Activated T-helper 1 cell treated with anti-CD3 and anti-CD28 coated beads, Interleukin-12 subunit alpha, Interleukin-12 subunit beta, Interleukin-2, Interleukin-4 antibody, amounts not matched to agents 30 ng/mL and 10 ng/mL and 1 ng/mL, durations not matched to agents 14 hours and 24 hours and 36 hours (primary cell): ENCODE measurements at regions of chr17 and their contacts with region 1.

Region 1: GRCh38 chr17:1516388-1517161 is at the start of gene INPP5K:
- DNase-seq: peak; percentile 99
- H3K4me3 Mint-ChIP-seq: peak within 1 kb of the TSS; percentile 93
- H3K27ac Mint-ChIP-seq: peak within 1 kb of the TSS; percentile 76
- H3K4me1 Mint-ChIP-seq: peaks cover 13% of the 10 kb centered on the region
- H3K27me3 Mint-ChIP-seq: no peaks in the 10 kb centered on the region
- total RNA-seq, gene INPP5K: 23.9 and 24.7 TPM in 2 replicates

Region 2: GRCh38 chr17:1260086-1260769 is 256.3 kb before region 1 on chr17:
- intact Hi-C with region 1: loop called (anchors 1 kb)
- DNase-seq: no peak
- H3K4me3 Mint-ChIP-seq: peak overlapping the region; percentile 10
- H3K27ac Mint-ChIP-seq: no peak overlapping the region
- H3K4me1 Mint-ChIP-seq: peaks cover 19% of the 10 kb centered on the region
- H3K27me3 Mint-ChIP-seq: peaks cover 50% of the 10 kb centered on the region

Region 3: GRCh38 chr17:1365445-1366039 is 151.0 kb before region 1 on chr17:
- intact Hi-C with region 1: loop called (anchors 1 kb)
- DNase-seq: peak; percentile 48
- H3K4me3 Mint-ChIP-seq: no peak overlapping the region
- H3K27ac Mint-ChIP-seq: no peak overlapping the region
- H3K4me1 Mint-ChIP-seq: peaks cover 47% of the 10 kb centered on the region
- H3K27me3 Mint-ChIP-seq: no peaks in the 10 kb centered on the region

Region 4: GRCh38 chr17:1455797-1456599 is 60.6 kb before region 1 on chr17 and contains the start of gene CRK:
- intact Hi-C with region 1: loop called (anchors 1 kb)
- DNase-seq: peak; percentile 99
- H3K4me3 Mint-ChIP-seq: peak within 1 kb of the TSS; percentile 92
- H3K27ac Mint-ChIP-seq: peak within 1 kb of the TSS; percentile 90
- H3K4me1 Mint-ChIP-seq: peaks cover 29% of the 10 kb centered on the region
- H3K27me3 Mint-ChIP-seq: peaks cover 13% of the 10 kb centered on the region
- total RNA-seq, gene CRK: 19.8 and 24.2 TPM in 2 replicates

Region 5: GRCh38 chr17:1561400-1562175 is 45.0 kb after region 1 on chr17:
- intact Hi-C with region 1: loop called (anchors 1 kb)
- DNase-seq: peak; percentile 27
- H3K4me3 Mint-ChIP-seq: peak overlapping the region; percentile 88
- H3K27ac Mint-ChIP-seq: peak overlapping the region; percentile 61
- H3K4me1 Mint-ChIP-seq: peaks cover 40% of the 10 kb centered on the region
- H3K27me3 Mint-ChIP-seq: peaks cover 11% of the 10 kb centered on the region

Region 6: GRCh38 chr17:1577182-1577581 is 60.6 kb after region 1 on chr17:
- intact Hi-C with region 1: no loop called
- DNase-seq: no peak
- H3K4me3 Mint-ChIP-seq: no peak overlapping the region
- H3K27ac Mint-ChIP-seq: peak overlapping the region; percentile 65
- H3K4me1 Mint-ChIP-seq: peaks cover 6% of the 10 kb centered on the region
- H3K27me3 Mint-ChIP-seq: peaks cover 3% of the 10 kb centered on the region